CD4-positive, alpha-beta memory T cell (primary cell): ENCODE measurements at regions of chr14 and their contacts with region 1.

Region 1: DNA sequence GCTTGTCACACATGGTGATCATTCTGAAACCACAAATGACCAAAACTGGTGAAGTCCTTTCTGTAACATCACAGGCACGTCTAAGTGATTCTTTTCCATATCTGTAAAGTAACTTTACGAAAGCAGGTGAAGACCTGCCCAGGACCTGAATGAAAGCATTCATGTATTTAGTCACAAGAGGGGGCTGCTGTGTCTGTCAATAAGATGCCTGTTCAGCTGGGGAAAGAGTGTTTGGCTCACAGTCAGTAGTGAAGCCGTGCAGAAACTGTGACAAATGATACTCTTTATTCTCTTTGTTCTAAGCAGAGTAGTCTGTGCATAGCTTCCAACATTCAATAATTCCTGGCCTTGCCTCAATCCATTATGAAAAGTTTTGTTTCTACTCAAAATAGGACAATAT is 373.5 kb upstream of the OR4E1 start:
- DNase-seq: peak; percentile 35 to 62 (median 55)
- H3K4me3 ChIP-seq: no peak overlapping the region
- H3K4me3 Mint-ChIP-seq: peak overlapping the region; percentile 46 to 89 (median 62)
- H3K27ac ChIP-seq: peak overlapping the region; percentile 21
- H3K27ac Mint-ChIP-seq: peak overlapping the region; percentile 70 to 88 (median 87)
- H3K4me1 ChIP-seq: peaks cover 13% of the 10 kb centered on the region
- H3K4me1 Mint-ChIP-seq: peaks cover 12 to 38% (median 21%) of the 10 kb centered on the region in 4 donors
- H3K27me3 ChIP-seq: no peaks in the 10 kb centered on the region
- H3K27me3 Mint-ChIP-seq: peaks cover 0 to 1% of the 10 kb centered on the region in 2 donors

Region 2: DNA sequence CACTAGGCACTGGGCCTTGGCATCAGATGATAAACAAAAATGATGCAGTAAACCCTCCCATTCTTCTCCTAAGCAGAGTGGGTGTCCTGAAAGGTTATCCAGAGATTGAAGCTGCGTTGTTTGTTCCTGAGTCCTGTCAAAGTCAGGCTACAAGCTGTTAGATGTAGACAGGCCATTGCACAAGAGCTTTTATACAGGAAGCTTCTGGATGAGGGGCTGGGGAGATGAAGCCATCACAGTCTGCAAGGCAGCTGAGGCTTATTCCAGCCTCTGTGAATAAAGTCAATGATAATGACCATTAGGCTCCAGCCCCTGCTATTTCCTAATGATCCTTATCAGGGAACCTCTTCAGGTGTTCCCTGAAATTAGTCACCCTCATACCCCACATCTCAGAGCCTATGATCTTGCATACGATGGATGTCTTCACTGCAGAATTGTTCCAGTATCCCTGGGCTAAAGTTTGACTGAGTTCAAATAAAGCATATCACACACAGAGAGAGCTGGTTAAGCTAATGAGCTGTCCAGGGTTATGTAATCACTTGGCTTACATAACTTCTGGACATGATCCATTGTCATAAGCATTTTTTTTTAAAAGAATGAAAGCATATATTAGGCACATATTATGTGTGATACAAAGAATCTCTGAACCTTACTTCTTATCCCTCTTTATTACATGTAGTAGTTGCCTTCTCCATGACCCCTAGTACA is 36.4 kb before region 1 on chr14:
- CTCF ChIA-PET with region 1: no interaction called
- POLR2A ChIA-PET with region 1: no interaction called
- intact Hi-C with region 1: no loop called
- DNase-seq: no peak
- H3K4me3 ChIP-seq: no peak overlapping the region
- H3K4me3 Mint-ChIP-seq: no peak overlapping the region
- H3K27ac ChIP-seq: no peak overlapping the region
- H3K27ac Mint-ChIP-seq: no peak overlapping the region
- H3K4me1 ChIP-seq: peaks cover 11% of the 10 kb centered on the region
- H3K4me1 Mint-ChIP-seq: peaks cover 7 to 12% (median 9%) of the 10 kb centered on the region in 4 donors
- H3K27me3 ChIP-seq: no peaks in the 10 kb centered on the region
- H3K27me3 Mint-ChIP-seq: no peaks in the 10 kb centered on the region

Region 3: GRCh38 chr14:22065347-22065746 is 18.2 kb after region 1 on chr14:
- CTCF ChIA-PET with region 1: interaction called, 5 read pairs
- POLR2A ChIA-PET with region 1: interaction called, 27 read pairs
- intact Hi-C with region 1: loop called (anchors 1 kb)
- DNase-seq: no peak
- H3K4me3 ChIP-seq: no peak overlapping the region
- H3K4me3 Mint-ChIP-seq: peak overlapping the region in 5 of 8 donors; percentile 33 to 47 (median 41)
- H3K27ac ChIP-seq: no peak overlapping the region
- H3K27ac Mint-ChIP-seq: peak overlapping the region in 4 of 7 donors; percentile 9 to 82 (median 63)
- H3K4me1 ChIP-seq: peaks cover 13% of the 10 kb centered on the region
- H3K4me1 Mint-ChIP-seq: peaks cover 12 to 23% (median 16%) of the 10 kb centered on the region in 4 donors
- H3K27me3 ChIP-seq: no peaks in the 10 kb centered on the region
- H3K27me3 Mint-ChIP-seq: no peaks in the 10 kb centered on the region

Region 4: GRCh38 chr14:22070119-22071011 is 23.2 kb after region 1 on chr14:
- CTCF ChIA-PET with region 1: interaction called, 5 read pairs
- POLR2A ChIA-PET with region 1: interaction called, 27 read pairs
- intact Hi-C with region 1: loop called (anchors 1 kb)
- DNase-seq: peak; percentile 50 to 74 (median 57)
- H3K4me3 ChIP-seq: peak overlapping the region; percentile 55 to 69
- H3K4me3 Mint-ChIP-seq: peak overlapping the region; percentile 89 to 96 (median 92)
- H3K27ac ChIP-seq: peak overlapping the region; percentile 38
- H3K27ac Mint-ChIP-seq: peak overlapping the region; percentile 90 to 96 (median 93)
- H3K4me1 ChIP-seq: peaks cover 39% of the 10 kb centered on the region
- H3K4me1 Mint-ChIP-seq: peaks cover 17 to 45% (median 24%) of the 10 kb centered on the region in 4 donors
- H3K27me3 ChIP-seq: no peaks in the 10 kb centered on the region
- H3K27me3 Mint-ChIP-seq: no peaks in the 10 kb centered on the region

Region 5: GRCh38 chr14:22084393-22085281 is 37.5 kb after region 1 on chr14:
- CTCF ChIA-PET with region 1: interaction called, 7 read pairs
- POLR2A ChIA-PET with region 1: no interaction called
- intact Hi-C with region 1: loop called (anchors 2 kb)
- DNase-seq: peak in 4 of 5 donors; percentile 44 to 52 (median 48)
- H3K4me3 ChIP-seq: no peak overlapping the region
- H3K4me3 Mint-ChIP-seq: peak overlapping the region in 6 of 8 donors; percentile 37 to 70 (median 61)
- H3K27ac ChIP-seq: no peak overlapping the region
- H3K27ac Mint-ChIP-seq: peak overlapping the region in 5 of 7 donors; percentile 15 to 73 (median 41)
- H3K4me1 ChIP-seq: no peaks in the 10 kb centered on the region
- H3K4me1 Mint-ChIP-seq: peaks cover 13 to 21% (median 16%) of the 10 kb centered on the region in 4 donors
- H3K27me3 ChIP-seq: no peaks in the 10 kb centered on the region
- H3K27me3 Mint-ChIP-seq: peaks cover 0 to 1% of the 10 kb centered on the region in 2 donors

Region 6: DNA sequence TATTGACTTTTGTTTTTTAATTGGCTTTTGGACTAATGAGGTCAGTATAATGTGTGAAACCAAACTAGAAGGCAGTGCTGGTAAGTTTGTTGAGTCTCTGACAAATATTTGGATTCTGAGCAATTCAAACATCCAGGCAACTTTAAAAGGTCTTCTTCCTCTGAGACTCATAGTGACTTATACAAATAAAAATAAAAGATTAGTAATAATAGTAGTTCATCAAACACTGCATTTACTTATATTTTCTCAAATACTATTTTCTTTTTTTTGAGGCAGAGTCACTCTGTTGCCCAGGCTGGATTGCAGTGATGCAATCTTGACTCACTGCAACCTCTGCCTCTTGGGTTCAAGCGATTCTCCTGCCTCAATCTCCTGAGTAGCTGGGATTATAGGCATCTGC is 204.0 kb after region 1 on chr14:
- CTCF ChIA-PET with region 1: no interaction called
- POLR2A ChIA-PET with region 1: no interaction called
- intact Hi-C with region 1: no loop called
- DNase-seq: no peak
- H3K4me3 ChIP-seq: no peak overlapping the region
- H3K4me3 Mint-ChIP-seq: no peak overlapping the region
- H3K27ac ChIP-seq: no peak overlapping the region
- H3K27ac Mint-ChIP-seq: no peak overlapping the region
- H3K4me1 ChIP-seq: no peaks in the 10 kb centered on the region
- H3K4me1 Mint-ChIP-seq: no peaks in the 10 kb centered on the region
- H3K27me3 ChIP-seq: no peaks in the 10 kb centered on the region
- H3K27me3 Mint-ChIP-seq: no peaks in the 10 kb centered on the region